Esophagus muscularis mucosa (tissue), 4 donors: ENCODE measurements at regions of chr2 and their contacts with region 1.

Region 1: DNA sequence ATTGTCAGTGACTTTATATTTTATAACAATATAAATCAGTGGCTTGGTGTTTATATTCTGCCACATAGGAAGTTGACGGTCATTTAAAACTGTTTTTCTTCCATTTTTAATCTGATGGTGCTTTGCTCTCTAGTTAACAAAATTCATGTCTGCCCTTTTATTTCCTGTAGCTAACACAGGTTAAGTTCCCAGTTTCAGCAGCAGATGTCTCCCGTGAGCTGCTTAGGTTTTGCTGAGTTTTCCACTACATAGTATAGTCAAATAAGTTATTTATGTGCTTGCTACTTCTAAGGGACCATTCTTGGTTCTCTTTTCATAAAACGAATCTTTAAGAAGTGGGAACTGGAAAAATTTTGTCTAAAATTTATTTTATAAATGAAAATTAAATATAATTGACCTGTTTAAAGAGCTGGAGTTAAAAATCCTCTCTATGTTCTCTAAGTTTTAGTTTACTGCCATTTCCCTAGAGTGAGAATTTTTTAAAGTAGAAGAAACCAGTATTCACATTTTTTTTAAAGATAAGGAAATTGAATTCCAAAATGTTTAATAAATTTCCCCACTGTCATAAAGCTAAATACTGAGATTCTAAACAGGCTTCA is 20.6 kb downstream of the HTR2B start:
- DNase-seq: peak; percentile 94
- H3K4me3 ChIP-seq: no peak overlapping the region
- H3K27ac ChIP-seq: peak overlapping the region; percentile 42 to 70 (median 58)
- H3K4me1 ChIP-seq: peaks cover 3 to 46% (median 41%) of the 10 kb centered on the region in 4 donors
- H3K27me3 ChIP-seq: no peaks in the 10 kb centered on the region
- CTCF ChIP-seq: peak; percentile 93 to 96 (median 95)
- EP300 ChIP-seq: no peak
- POLR2A ChIP-seq: no peak

Region 2: GRCh38 chr2:231068525-231069222 is 35.5 kb before region 1 on chr2:
- intact Hi-C with region 1: no loop called
- DNase-seq: no peak
- H3K4me3 ChIP-seq: no peak overlapping the region
- H3K27ac ChIP-seq: no peak overlapping the region
- H3K4me1 ChIP-seq: no peaks in the 10 kb centered on the region
- H3K27me3 ChIP-seq: no peaks in the 10 kb centered on the region
- CTCF ChIP-seq: no peak
- EP300 ChIP-seq: no peak
- POLR2A ChIP-seq: no peak

Region 3: GRCh38 chr2:231191896-231192872 is 88.0 kb after region 1 on chr2:
- intact Hi-C with region 1: loop called (anchors 2 kb)
- DNase-seq: peak; percentile 93
- H3K4me3 ChIP-seq: no peak overlapping the region
- H3K27ac ChIP-seq: peak overlapping the region; percentile 93 to 96 (median 94)
- H3K4me1 ChIP-seq: peaks cover 19 to 58% (median 52%) of the 10 kb centered on the region in 4 donors
- H3K27me3 ChIP-seq: peaks cover 0 to 3% (median 0%) of the 10 kb centered on the region in 4 donors
- CTCF ChIP-seq: peak; percentile 69 to 83 (median 82)
- EP300 ChIP-seq: peak; percentile 67
- POLR2A ChIP-seq: no peak

Region 4: GRCh38 chr2:231227309-231228162 is 123.3 kb after region 1 on chr2:
- intact Hi-C with region 1: loop called (anchors 5 kb)
- DNase-seq: peak; percentile 93
- H3K4me3 ChIP-seq: no peak overlapping the region
- H3K27ac ChIP-seq: peak overlapping the region; percentile 87 to 92 (median 88)
- H3K4me1 ChIP-seq: peaks cover 5 to 77% (median 75%) of the 10 kb centered on the region in 4 donors
- H3K27me3 ChIP-seq: no peaks in the 10 kb centered on the region
- CTCF ChIP-seq: peak; percentile 68 to 83 (median 74)
- EP300 ChIP-seq: no peak
- POLR2A ChIP-seq: no peak

Region 5: DNA sequence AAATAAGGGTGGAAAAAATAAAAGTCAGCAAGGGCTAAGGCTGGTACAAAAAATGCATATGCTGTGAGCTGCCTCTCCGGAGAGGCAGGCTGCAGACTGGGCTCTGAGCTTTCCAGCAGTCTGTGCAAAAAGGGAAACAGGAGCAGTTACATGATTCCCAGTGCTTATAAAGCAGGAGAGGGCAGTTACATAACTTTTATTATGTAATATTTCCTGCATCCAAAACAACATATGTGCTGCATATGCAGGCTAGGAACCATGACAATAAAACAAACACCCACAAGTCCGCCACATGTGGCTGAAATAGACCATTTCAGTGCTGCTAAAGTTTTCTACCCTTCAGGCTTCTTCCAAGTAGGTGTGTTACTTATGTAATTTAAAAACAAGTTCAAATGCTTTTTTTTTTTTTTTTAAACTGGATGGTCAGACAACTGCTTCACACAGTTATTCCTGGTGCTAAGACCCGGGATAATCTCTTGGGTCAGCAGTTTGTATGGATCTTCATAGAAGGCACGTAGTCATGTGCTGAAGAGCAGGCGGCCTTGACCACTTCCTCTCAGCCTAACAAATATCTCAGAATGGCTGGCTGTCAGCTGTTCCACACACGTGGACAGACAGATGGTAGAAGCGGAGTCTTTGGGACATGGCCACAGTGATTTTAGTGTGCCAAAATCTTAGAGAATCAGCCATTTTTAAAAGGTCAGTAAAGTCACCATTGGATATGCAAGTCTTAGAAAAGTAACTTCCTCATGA is 137.7 kb after region 1 on chr2:
- intact Hi-C with region 1: no loop called
- DNase-seq: no peak
- H3K4me3 ChIP-seq: no peak overlapping the region
- H3K27ac ChIP-seq: peak overlapping the region in 1 of 4 donors; percentile 17
- H3K4me1 ChIP-seq: peaks cover 0 to 6% (median 0%) of the 10 kb centered on the region in 4 donors
- H3K27me3 ChIP-seq: no peaks in the 10 kb centered on the region
- CTCF ChIP-seq: no peak
- EP300 ChIP-seq: no peak
- POLR2A ChIP-seq: no peak

Region 6: DNA sequence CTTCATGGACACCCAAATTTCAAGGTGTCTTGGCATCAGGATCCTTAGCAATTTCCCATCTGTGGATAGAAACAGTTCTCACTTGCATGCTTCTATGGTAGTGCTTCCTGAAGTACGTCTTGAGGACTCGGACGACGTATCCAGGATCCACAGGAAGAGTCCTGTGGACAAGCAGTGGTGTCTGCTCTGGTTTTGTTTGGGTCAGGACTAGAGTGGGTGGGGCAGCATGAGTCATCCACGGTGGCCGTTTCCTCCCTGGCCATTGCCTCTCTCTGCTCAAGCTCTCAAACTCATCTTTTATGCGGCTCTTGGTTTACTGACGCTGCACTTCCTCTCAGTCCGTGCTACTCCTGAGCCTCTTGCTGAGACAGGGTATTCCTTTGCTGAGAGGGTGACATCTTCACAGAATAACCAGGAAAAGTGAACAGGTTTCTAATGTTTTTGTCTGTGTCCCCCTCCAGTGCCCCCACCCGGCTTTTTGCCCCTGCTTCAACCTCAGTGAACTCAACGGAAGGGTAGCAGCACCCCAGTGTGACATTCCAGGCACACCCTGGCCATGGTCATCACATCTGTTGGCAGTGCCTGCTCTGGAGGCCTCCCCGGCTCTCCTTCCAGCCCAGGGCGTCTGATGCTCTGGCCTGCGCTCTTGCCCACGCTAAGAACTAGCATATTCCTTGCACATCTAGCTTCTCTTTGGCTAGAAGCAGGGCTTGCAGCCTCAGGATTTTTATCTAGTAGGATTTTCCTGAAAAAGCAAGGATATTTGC is 156.4 kb after region 1 on chr2:
- intact Hi-C with region 1: loop called (anchors 10 kb)
- DNase-seq: no peak
- H3K4me3 ChIP-seq: no peak overlapping the region
- H3K27ac ChIP-seq: no peak overlapping the region
- H3K4me1 ChIP-seq: no peaks in the 10 kb centered on the region
- H3K27me3 ChIP-seq: no peaks in the 10 kb centered on the region
- CTCF ChIP-seq: no peak
- EP300 ChIP-seq: no peak
- POLR2A ChIP-seq: no peak

Region 7: DNA sequence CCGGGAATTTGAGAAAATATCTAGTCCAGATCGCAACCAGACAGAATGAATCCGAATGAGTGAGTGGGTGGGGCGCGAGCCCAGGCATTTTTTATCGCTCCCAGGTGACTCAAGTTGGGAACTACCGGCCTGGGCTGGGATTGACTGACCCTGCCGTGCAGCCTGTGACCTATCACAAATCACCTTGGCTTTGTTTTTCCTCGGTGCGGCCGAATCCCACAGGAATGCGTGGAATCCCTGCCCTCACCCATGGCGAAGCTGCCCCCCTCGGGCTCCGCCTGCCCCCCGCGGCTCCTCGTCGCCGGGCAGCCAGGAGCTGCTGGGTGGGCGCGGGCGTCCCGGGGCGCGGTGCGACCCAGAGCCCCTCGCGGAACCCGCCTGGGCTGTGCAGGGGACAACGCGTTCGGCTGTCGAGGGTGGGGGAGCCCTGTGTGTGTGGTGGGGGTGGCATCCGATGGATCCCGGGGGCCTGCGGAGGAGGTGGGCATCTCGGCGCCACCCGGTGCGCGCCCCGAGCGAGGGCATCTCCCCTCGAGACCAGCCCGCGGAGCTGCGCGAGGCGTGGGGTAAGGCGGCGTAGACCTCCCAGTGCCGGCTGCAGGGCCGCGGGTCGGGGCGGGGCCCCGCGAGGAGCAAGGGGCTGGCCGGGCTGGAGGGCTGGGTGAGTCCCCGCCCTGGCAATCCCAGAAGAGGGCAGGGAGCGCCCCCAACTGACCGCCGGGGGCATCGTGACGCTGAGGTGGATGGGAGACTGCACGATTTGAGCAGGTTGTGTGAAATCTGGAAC is 307.8 kb after region 1 on chr2:
- intact Hi-C with region 1: loop called (anchors 5 kb)
- DNase-seq: no peak
- H3K4me3 ChIP-seq: peak overlapping the region; percentile 62 to 80 (median 64)
- H3K27ac ChIP-seq: peak overlapping the region in 2 of 4 donors; percentile 12 to 35
- H3K4me1 ChIP-seq: peaks cover 10 to 17% (median 15%) of the 10 kb centered on the region in 4 donors
- H3K27me3 ChIP-seq: no peaks in the 10 kb centered on the region
- CTCF ChIP-seq: peak; percentile 78 to 87 (median 80)
- EP300 ChIP-seq: no peak
- POLR2A ChIP-seq: no peak